ENCODE measurements at regions of chr9 and their contacts with region 1.

Region 1: DNA sequence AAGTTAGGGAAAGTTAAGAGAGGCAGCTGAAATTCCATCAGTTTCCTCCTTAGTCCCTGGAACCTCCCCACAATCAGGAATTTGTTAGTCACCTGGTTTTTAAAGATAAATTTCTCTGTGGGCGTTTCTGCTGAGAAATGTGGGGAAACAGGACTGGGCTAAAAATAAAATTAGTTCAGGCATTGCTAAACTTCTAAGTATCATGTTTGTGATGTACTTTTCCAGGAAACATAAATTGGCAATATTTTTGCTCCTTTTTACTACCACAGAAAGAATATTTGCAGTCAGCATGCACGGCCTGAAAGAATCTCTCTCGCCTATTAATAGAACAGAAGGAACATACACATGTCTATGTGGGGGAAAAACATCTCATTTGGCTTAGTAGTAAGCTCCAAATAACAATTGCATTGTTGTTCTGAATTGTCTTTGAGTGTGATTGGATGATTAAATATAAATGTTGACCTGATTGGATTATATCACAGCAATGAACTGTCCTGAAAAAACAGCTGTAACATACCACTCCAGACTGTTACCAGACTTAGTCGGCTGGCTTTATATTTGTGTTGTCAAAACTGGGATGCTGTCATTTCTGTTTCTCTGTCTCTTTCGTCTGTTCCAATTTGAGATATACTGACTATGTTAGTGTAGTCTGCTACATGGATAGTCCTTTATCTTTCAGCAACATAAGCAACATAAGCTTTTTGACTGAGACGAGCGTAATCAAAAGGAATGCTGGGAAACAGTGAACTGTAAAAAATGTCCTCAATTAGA is 12.9 kb downstream of the TJP2 start:
- DNase-seq: no peak
- H3K4me3 ChIP-seq: no peak overlapping the region
- CTCF ChIP-seq: no peak

Region 2: GRCh38 chr9:69035438-69036308 is 151.4 kb before region 1 on chr9 and contains the start of gene FXN:
- CTCF ChIA-PET with region 1: interaction called, 69 read pairs
- POLR2A ChIA-PET with region 1: no interaction called
- DNase-seq: no peak
- H3K4me3 ChIP-seq: peak within 1 kb of the TSS; percentile 89
- CTCF ChIP-seq: peak; percentile 99

Region 3: GRCh38 chr9:69044240-69045219 is 142.5 kb before region 1 on chr9:
- CTCF ChIA-PET with region 1: interaction called, 511 read pairs
- POLR2A ChIA-PET with region 1: no interaction called
- DNase-seq: no peak
- H3K4me3 ChIP-seq: no peak overlapping the region
- CTCF ChIP-seq: no peak

Region 4: DNA sequence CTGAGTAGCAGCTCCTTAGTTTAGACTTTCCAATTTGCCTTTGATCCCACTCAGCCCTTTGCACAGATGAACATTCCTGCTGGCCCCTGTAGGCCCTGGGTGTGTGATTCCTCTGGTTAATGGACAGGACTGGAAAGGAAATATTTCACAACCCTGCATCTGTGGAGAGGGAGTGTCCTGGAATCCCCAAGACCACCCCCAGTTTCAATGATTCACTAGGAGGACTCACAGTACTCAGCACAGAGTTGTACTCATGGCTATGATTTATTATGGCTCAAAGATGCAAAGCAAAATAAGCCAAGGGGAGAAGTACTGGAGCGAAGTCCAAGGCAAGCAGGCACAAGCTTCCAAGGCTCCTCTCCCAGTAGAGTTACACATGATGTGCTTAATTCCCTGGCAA is 55.3 kb before region 1 on chr9:
- CTCF ChIA-PET with region 1: no interaction called
- POLR2A ChIA-PET with region 1: no interaction called
- DNase-seq: peak; percentile 89
- H3K4me3 ChIP-seq: no peak overlapping the region
- CTCF ChIP-seq: no peak

Region 5: DNA sequence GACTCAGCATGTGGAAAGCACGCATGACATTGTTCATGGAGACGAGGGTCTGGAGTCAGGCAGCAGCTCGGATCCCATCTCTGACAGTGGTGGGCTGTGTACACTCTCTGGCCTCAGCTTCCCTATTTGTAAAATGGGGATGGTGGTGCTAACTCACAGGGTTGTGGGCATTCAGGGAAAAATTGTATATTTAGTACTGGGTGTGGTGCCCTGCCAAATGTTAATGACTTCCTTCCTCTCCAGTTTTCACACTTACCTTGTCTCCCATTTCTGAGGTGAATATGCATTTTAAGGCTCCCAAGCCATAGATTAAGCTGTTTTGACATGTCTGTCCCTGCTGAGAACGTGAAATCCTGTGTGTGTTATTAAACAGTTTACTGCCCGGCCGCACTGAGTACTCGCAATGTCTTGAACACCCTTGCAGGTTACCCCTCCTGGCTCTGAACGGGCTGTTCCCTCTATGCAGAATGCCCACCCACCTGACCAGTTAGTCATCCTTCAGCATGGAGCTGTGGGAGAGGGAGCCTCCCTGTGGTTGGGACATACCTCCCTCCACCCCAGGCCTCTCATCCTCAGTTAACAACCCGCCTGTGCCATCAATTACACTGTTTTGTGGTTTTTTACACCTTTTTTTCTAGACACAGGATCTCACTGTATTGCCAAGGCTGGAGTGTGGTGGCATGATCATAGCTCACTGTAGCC is 12.9 kb after region 1 on chr9:
- CTCF ChIA-PET with region 1: interaction called, 12 read pairs
- POLR2A ChIA-PET with region 1: no interaction called
- DNase-seq: no peak
- H3K4me3 ChIP-seq: no peak overlapping the region
- CTCF ChIP-seq: no peak

Measured in AG04449 (cell line).